ENCODE measurements at regions of chr2 and their contacts with region 1.

Region 1: GRCh38 chr2:219057709-219058540 is 2.8 kb downstream of the IHH start:
- DNase-seq: peak; percentile 84
- ATAC-seq: peak; percentile 91
- H3K4me3 Mint-ChIP-seq: peak overlapping the region; percentile 39
- H3K27ac Mint-ChIP-seq: no peak overlapping the region
- H3K4me1 Mint-ChIP-seq: peaks cover 22% of the 10 kb centered on the region
- H3K27me3 Mint-ChIP-seq: peaks cover 64% of the 10 kb centered on the region

Region 2: GRCh38 chr2:218631837-218632236 is 426.1 kb before region 1 on chr2:
- CTCF ChIA-PET with region 1: no interaction called
- DNase-seq: no peak
- ATAC-seq: no peak
- H3K4me3 Mint-ChIP-seq: no peak overlapping the region
- H3K27ac Mint-ChIP-seq: no peak overlapping the region
- H3K4me1 Mint-ChIP-seq: peaks cover 12% of the 10 kb centered on the region
- H3K27me3 Mint-ChIP-seq: no peaks in the 10 kb centered on the region

Region 3: DNA sequence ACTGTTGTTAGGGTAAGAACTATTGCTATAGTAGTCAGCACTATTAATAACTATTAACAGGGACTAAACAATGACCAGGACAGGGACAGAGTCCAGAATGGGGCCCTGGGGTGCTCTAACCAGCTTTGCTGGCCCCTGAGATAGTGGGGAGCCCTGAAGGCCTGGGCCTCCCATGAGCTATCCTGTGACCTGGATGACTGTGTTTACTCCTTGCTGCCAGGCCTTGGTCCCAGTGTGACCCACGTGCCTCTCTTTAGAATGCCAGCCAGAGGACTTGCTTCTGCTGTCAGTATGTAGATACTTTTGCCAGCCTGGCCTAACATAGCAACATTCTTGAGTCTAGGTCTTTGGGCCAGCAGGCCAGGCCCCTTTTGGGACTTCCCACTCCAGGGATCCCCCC is 87.0 kb before region 1 on chr2:
- CTCF ChIA-PET with region 1: no interaction called
- DNase-seq: no peak
- ATAC-seq: no peak
- H3K4me3 Mint-ChIP-seq: no peak overlapping the region
- H3K27ac Mint-ChIP-seq: no peak overlapping the region
- H3K4me1 Mint-ChIP-seq: no peaks in the 10 kb centered on the region
- H3K27me3 Mint-ChIP-seq: peaks cover 58% of the 10 kb centered on the region

Region 4: GRCh38 chr2:218995972-218996711 is 61.8 kb before region 1 on chr2:
- CTCF ChIA-PET with region 1: interaction called, 14 read pairs
- DNase-seq: peak; percentile 80
- ATAC-seq: peak; percentile 66
- H3K4me3 Mint-ChIP-seq: no peak overlapping the region
- H3K27ac Mint-ChIP-seq: no peak overlapping the region
- H3K4me1 Mint-ChIP-seq: peaks cover 2% of the 10 kb centered on the region
- H3K27me3 Mint-ChIP-seq: peaks cover 84% of the 10 kb centered on the region

Region 5: DNA sequence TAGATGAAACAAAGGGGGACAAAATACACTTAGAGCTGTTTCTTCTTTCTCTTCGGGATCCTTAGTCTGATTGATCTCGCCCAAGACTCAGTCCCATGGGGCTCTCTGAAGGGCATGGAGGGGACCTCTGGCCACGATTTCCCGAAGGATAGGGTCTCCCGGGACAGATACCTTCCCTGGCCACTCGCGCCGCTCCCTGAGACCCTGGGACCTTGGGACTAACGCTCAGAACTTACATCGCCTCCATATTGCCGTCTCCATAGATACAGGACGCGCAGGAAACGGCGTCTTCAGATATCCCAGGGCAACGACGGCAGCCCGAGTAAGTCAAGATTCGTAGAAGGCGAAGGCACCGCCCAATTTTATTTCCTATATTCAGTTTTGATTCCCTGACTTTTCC is 16.7 kb before region 1 on chr2 and contains the start of gene CFAP65:
- CTCF ChIA-PET with region 1: interaction called, 11 read pairs
- DNase-seq: no peak
- ATAC-seq: no peak
- H3K4me3 Mint-ChIP-seq: no peak within 1 kb of the TSS
- H3K27ac Mint-ChIP-seq: no peak within 1 kb of the TSS
- H3K4me1 Mint-ChIP-seq: peaks cover 4% of the 10 kb centered on the region
- H3K27me3 Mint-ChIP-seq: peaks cover 62% of the 10 kb centered on the region
- total RNA-seq, gene CFAP65: not detected

Region 6: DNA sequence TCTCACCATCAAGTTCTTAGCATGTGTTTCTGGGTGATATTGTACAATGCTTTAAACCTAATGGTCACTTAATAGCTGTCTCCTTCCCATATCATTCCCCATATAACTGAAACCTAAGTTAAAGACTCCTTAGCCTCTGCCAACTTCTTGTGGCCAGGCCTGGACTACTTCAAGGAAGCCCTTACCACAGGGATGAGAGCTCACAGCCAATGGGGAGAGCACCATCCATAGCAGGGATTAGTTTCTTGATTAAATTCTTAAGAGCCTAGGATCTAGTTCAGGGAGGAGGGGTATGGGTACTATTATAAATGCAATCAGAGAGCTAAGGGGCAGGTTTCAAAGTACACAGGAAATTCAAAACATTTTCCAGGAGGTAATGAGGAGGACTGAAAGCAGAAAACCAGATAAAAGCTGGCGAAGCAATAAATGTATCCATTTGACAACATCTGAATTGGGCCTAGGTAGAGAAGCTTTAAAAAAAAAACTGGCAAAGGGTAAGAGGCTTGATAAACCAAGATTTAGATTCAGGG is 37.5 kb after region 1 on chr2:
- CTCF ChIA-PET with region 1: interaction called, 11 read pairs
- DNase-seq: no peak
- ATAC-seq: no peak
- H3K4me3 Mint-ChIP-seq: no peak overlapping the region
- H3K27ac Mint-ChIP-seq: no peak overlapping the region
- H3K4me1 Mint-ChIP-seq: peaks cover 3% of the 10 kb centered on the region
- H3K27me3 Mint-ChIP-seq: no peaks in the 10 kb centered on the region

Region 7: DNA sequence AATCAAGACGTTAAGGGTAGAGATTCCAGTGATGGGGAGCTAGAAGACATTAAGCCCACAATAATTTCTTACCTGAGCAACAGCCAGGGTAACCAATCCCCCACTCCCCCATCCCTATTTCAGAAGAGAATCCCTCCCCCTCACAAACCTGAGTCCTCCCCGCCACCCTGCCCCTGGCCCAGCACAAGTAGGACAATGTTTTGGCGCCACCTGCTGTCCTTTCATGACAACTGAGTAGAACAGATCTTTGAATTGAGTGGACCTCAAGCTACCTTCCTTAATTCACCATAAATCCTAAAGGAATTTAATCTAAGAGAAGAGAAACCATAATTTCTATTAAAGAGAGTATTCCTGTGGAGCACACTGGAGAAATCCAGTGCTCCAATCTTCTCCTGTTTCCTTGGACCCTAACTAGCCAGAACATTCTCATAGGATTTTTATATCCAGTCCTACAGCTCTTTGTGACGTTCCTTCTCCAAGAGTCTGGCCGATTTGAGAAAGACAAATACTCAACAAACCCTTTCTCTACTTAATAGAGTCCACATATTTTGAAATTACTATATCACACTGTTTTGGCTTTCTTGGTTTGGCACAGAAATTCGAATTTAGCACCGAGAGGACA is 61.6 kb after region 1 on chr2:
- CTCF ChIA-PET with region 1: interaction called, 141 read pairs
- DNase-seq: peak; percentile 69
- ATAC-seq: peak; percentile 49
- H3K4me3 Mint-ChIP-seq: no peak overlapping the region
- H3K27ac Mint-ChIP-seq: no peak overlapping the region
- H3K4me1 Mint-ChIP-seq: peaks cover 7% of the 10 kb centered on the region
- H3K27me3 Mint-ChIP-seq: no peaks in the 10 kb centered on the region

Region 8: DNA sequence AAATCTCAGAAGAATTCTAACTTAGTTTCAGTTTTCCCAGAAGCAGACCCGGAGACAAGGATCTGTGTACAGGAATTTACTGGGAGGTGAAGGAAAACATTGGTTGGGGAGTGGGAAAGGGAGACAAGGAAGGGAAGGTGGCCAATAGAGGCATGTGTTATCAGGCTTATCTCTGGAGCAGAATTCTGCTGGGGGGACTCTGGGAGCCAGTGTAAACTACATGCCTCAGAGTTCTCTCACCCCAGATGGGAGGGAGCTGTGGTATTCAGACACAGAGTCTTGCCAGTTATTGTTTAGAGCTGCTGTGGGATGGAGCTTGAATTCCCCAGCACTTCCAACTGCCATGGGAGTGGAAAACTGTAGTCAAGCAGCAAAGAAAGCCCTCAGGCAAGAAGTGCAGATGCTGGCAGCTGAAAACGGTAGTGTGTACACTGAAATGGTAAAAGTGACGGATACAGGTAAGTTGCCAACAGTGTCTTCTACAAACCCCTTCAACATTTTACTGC is 310.8 kb after region 1 on chr2:
- CTCF ChIA-PET with region 1: no interaction called
- DNase-seq: no peak
- ATAC-seq: no peak
- H3K4me3 Mint-ChIP-seq: no peak overlapping the region
- H3K27ac Mint-ChIP-seq: no peak overlapping the region
- H3K4me1 Mint-ChIP-seq: no peaks in the 10 kb centered on the region
- H3K27me3 Mint-ChIP-seq: no peaks in the 10 kb centered on the region

Measured in activated CD8-positive, alpha-beta memory T cell treated with anti-CD3 and anti-CD28 coated beads, Interleukin-2, amount 10 ng/mL, durations not matched to agents 7 days and 5 days (primary cell).